Spleen (tissue), 13 donors: ENCODE measurements at regions of chr17 and their contacts with region 1.

Region 1: DNA sequence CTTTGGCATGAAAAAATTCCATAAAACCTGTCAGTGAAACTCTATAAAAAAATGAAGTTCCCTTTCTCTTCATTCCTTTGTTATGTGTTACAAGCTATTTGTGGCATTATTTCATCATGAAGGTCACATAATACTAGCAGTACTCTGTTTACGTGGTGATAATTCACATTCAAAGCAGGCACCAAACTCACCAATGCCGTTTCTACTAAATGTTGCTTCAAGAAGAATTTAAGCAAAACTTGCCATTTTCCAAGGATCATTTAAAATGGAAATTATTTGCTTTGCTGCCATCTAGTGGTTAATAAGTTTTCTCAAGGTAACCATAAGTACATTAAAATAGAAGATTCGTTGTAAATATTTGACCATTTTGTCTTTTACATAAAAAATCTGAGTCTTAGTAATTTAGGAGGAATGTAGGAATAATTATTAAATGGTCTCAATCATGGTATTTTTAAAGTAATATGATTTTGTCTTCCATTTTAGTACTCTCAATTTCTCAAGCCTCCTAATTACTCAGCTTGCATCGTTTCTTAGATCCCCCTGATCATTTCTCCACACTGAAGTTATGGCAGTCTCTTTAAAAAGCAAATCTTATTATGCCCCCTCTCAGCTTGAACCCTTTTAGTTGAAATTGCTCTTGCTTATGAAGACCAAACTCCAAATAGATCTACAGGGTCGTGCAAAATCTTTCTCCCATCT is 80.8 kb downstream of the OMG start:
- DNase-seq: no peak
- H3K4me3 ChIP-seq: no peak overlapping the region
- H3K27ac ChIP-seq: no peak overlapping the region
- H3K4me1 ChIP-seq: peaks cover 0 to 6% (median 0%) of the 10 kb centered on the region in 6 donors
- H3K27me3 ChIP-seq: no peaks in the 10 kb centered on the region
- CTCF ChIP-seq: peak; percentile 26 to 75 (median 60)
- POLR2A ChIP-seq: no peak

Region 2: DNA sequence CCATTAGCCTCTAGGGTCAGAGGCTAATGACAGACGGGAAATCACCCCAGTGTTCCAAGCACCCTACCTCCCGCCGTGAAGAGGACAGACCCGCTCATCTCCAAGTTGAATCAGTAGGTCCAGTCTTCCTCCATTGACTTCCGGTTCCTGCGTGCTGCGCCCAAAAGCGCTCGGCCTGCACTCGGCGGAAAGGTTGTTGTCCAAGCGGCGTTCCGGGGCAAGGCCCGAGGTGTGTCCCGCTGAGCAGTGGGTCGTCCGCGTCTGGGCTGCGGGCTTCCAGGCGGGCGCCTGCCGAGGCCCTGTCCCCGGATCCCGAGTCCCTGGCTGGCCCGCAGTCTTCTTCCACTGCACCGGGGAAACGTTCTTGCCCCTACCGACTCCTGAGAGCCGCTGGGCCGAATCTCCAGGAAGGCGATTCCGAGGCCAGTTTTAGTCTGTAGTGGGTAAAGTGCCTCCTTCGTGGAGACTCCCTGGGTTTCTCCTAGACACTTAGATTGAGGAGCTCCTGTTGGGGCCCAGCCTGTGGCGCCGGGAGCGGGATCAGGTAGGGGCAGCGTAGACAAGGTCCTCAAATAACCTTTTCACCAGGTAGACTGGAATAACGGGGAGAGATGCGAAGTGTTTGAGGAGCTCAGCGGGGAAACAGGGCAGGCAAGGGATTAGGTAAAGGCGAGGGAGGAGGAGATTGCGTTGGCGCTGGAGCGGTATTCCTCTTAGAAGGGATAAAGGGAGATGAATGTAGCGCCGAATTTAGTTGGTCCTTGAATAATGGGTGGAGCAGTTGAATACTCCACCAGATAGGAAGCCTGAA is 309.9 kb before region 1 on chr17 and contains the start of gene TEFM:
- intact Hi-C with region 1: loop called (anchors 10 kb)
- DNase-seq: peak; percentile 96
- H3K4me3 ChIP-seq: peak within 1 kb of the TSS; percentile 65 to 90 (median 70)
- H3K27ac ChIP-seq: peak within 1 kb of the TSS; percentile 82 to 93 (median 86)
- H3K4me1 ChIP-seq: peaks cover 15 to 69% (median 34%) of the 10 kb centered on the region in 6 donors
- H3K27me3 ChIP-seq: no peaks in the 10 kb centered on the region
- CTCF ChIP-seq: peak in 2 of 11 experiments; percentile 15 to 21
- POLR2A ChIP-seq: peak in 2 of 3 donors; percentile 7 to 80
- total RNA-seq, gene TEFM: 16.0 to 33.4 (median 18.0) TPM

Region 3: DNA sequence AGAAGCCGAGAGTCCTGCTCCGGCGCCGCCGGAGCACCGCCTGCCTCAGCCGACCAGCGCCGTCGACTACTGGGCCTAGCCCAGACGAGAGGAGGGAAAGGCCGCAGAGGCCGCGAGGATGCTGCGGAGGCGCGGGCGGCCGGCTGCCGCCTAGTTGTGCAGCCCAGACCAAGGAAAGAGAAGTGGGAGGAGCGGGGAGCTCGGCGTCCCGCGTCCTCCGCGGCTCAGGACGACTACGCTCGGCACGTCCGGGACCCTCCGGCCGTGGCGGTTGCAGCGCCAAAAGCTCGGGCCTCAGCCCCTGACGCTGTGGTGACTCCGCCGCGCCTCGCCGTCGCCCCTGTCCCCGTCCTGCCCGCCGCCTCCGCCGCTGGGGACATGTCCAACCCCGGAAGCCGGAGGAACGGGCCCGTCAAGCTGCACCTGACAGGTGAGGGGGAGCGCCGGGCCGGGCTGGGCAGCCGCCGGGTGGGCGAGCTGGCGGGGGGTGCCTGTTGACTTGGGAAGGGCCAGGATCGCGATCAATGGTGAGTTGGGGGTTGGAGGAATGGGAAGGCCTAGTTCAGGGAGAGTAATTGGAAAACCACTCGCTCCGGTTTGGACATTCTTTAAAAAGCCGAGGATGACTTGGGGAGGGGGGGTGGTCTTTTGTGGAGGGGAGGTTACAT is 207.7 kb before region 1 on chr17:
- intact Hi-C with region 1: loop called (anchors 5 kb)
- DNase-seq: peak; percentile 92
- H3K4me3 ChIP-seq: peak overlapping the region; percentile 52 to 71 (median 64)
- H3K27ac ChIP-seq: peak overlapping the region; percentile 55 to 87 (median 83)
- H3K4me1 ChIP-seq: peaks cover 4 to 24% (median 12%) of the 10 kb centered on the region in 6 donors
- H3K27me3 ChIP-seq: no peaks in the 10 kb centered on the region
- CTCF ChIP-seq: peak in 1 of 11 experiments; percentile 7
- POLR2A ChIP-seq: no peak